ENCODE measurements at regions of chr19 and their contacts with region 1.

Region 1: DNA sequence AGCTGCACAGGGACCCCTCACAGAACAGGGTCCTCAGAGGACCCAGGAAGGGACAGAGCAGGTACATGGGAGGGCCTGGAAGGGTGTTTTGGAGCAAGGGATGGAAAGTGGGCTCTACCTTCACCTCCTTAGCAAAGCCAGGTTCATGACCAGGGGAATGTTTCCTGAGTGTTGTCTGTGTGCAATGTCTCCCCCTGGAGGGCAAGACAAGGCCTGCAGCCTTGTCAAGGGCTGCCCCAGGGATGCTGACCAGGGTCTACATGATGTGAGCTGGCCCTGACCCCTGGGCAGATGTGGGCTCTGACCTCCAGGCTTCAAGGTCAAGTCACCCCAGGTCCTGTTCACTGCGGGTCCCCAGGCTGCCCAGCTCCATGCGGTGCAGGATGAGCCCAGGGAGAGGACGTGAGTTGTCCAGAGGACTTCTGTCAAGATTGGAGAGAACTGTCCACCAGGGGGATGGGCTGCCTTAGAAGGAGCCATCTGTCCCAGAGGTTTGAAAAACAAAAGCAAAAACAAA is 1.0 kb upstream of the CEACAM1 start:
- DNase-seq: peak; percentile 79 to 94
- ATAC-seq: peak; percentile 79 to 95
- H3K4me3 ChIP-seq: no peak overlapping the region
- H3K27ac ChIP-seq: peak overlapping the region; percentile 60 to 63; a peak in 5 of 6 replicates
- H3K4me1 ChIP-seq: peaks cover 12% of the 10 kb centered on the region
- CTCF ChIP-seq: peak; percentile 98
- EP300 ChIP-seq: no peak
- POLR2A ChIP-seq: no peak
- RAD21 ChIP-seq: peak; percentile 98

Region 2: GRCh38 chr19:42455621-42456081 is 73.7 kb before region 1 on chr19:
- CTCF ChIA-PET with region 1: interaction called, 352 read pairs
- POLR2A ChIA-PET with region 1: no interaction called
- DNase-seq: peak; percentile 70 to 83
- ATAC-seq: peak; percentile 83 to 87
- H3K4me3 ChIP-seq: no peak overlapping the region
- H3K27ac ChIP-seq: no peak overlapping the region; a peak in 1 of 6 replicates
- H3K4me1 ChIP-seq: peaks cover 12% of the 10 kb centered on the region
- CTCF ChIP-seq: no peak
- EP300 ChIP-seq: no peak
- POLR2A ChIP-seq: no peak
- RAD21 ChIP-seq: no peak; a peak in 1 of 5 replicates

Region 3: DNA sequence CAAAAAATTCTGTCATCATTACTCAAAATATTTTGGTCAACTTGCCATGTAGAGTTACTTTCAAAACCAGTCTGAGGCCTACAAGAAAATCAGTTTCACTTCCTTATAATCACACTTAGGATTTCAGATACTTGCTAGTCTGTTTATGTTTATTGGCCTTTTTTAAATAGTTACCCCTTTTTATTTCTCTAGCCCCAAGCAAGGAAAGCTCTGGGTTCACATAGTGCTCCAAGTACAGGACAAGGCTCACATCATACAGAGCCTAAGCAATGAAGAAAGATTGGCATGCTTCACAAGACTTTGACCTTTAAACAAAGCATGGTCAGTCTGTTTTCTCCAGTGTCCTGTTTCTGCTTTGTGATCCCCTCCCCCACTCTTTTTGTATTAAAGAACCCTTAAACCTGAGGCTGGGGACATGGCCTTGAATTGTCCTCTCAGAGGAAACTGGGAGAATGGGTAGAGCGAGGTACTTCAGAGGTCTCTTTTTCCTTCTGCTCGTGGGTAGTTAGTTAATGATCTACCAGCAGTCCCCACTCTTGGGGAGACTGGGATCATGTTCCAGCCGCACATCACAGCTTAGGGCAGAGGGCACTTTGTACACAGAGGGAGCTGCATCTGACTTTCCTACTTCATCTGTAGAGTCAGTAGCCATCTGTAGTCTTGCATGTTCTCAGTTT is 31.7 kb before region 1 on chr19:
- CTCF ChIA-PET with region 1: interaction called, 12 read pairs
- POLR2A ChIA-PET with region 1: no interaction called
- DNase-seq: peak; percentile 73 to 80
- ATAC-seq: peak; percentile 75 to 93
- H3K4me3 ChIP-seq: no peak overlapping the region; the same call in 2 of the 3 replicates
- H3K27ac ChIP-seq: peak overlapping the region; percentile 73 to 76
- H3K4me1 ChIP-seq: peaks cover 30% of the 10 kb centered on the region
- CTCF ChIP-seq: no peak
- EP300 ChIP-seq: no peak
- POLR2A ChIP-seq: peak; percentile 32
- RAD21 ChIP-seq: 0 out of 5 replicates have a peak, but pooled peaks of 1 of the 2 experiments have one; percentile 2

Region 4: GRCh38 chr19:42540071-42540553 is 10.8 kb after region 1 on chr19:
- CTCF ChIA-PET with region 1: interaction called, 87 read pairs
- POLR2A ChIA-PET with region 1: no interaction called
- DNase-seq: no peak
- ATAC-seq: no peak
- H3K4me3 ChIP-seq: no peak overlapping the region
- H3K27ac ChIP-seq: no peak overlapping the region
- H3K4me1 ChIP-seq: no peaks in the 10 kb centered on the region
- CTCF ChIP-seq: no peak
- EP300 ChIP-seq: no peak
- POLR2A ChIP-seq: no peak
- RAD21 ChIP-seq: no peak

Region 5: DNA sequence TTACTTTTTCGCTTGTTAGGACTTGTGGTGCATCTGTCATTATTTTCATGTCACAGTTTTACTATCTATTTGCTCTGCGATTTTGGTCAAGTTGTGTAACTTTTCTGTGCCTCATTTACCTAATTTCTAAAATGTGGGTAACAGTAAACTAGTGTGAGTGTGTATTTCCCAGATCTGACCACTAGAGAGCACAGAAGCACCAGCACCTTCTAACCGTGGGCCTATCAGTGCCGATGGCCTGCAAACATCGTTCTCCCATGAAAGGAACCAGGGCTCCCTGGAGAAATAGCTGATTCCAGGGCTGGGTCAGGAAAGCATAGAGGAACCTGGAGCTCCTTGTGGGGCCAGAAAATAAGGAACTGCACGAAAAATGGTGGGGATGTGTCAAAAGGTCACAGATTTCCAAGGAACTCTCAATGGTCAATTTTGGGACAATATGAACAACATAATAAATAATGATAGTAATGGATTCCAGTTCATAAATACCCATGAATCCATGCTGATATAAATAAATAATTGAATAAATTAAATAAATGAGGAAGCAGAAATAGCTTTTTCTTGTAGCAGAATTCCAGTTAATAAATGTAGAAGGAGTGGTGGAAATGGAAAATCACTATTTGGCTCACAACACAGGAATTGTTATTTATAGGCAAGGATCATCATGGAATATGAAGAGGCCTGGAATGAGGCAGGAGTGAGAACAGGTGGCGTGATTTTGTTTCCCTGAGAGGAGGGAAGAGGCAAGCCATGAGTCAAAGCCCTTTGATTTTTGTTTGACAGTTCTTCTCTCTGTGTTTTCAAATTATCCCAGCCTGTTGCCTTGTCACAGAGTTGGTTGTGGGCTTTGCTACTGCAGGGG is 34.3 kb after region 1 on chr19:
- CTCF ChIA-PET with region 1: interaction called, 18 read pairs
- POLR2A ChIA-PET with region 1: no interaction called
- DNase-seq: peak; percentile 76 to 95
- ATAC-seq: peak; percentile 79 to 91
- H3K4me3 ChIP-seq: no peak overlapping the region
- H3K27ac ChIP-seq: no peak overlapping the region
- H3K4me1 ChIP-seq: no peaks in the 10 kb centered on the region
- CTCF ChIP-seq: peak; percentile 81
- EP300 ChIP-seq: no peak
- POLR2A ChIP-seq: no peak
- RAD21 ChIP-seq: peak; percentile 77 to 78

Region 6: DNA sequence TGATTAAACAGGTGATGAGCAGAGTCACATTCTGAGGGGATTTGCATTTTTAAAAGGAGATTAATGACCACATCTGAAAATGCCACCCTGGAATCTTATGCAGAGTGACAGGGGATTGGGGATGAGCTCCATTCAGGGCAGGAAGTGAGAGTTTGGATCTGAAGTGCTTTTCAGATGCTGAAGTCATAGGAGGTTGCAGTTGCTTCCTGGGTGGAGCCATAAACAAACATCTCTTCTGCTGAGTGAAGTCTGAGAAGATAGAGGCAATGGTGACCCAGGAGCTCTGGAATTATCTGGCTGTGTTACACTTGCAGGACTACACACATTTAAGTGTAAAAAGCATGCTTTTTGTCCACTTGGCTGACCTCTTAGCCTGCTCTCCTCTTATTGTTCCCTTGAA is 287.6 kb after region 1 on chr19:
- CTCF ChIA-PET with region 1: no interaction called
- POLR2A ChIA-PET with region 1: no interaction called
- DNase-seq: peak in 1 of 2 experiments; percentile 31
- ATAC-seq: 0 out of 6 replicates have a peak, but pooled peaks of 1 of the 2 experiments have one; percentile 29
- H3K4me3 ChIP-seq: no peak overlapping the region
- H3K27ac ChIP-seq: peak overlapping the region in 1 of 2 experiments; percentile 0; a peak in 1 of 6 replicates
- H3K4me1 ChIP-seq: peaks cover 7% of the 10 kb centered on the region; the same call in 2 of the 3 replicates
- CTCF ChIP-seq: no peak
- EP300 ChIP-seq: no peak
- POLR2A ChIP-seq: no peak
- RAD21 ChIP-seq: no peak